Tibial artery (tissue), 4 donors: ENCODE measurements at regions of chr9 and their contacts with region 1.

Region 1: DNA sequence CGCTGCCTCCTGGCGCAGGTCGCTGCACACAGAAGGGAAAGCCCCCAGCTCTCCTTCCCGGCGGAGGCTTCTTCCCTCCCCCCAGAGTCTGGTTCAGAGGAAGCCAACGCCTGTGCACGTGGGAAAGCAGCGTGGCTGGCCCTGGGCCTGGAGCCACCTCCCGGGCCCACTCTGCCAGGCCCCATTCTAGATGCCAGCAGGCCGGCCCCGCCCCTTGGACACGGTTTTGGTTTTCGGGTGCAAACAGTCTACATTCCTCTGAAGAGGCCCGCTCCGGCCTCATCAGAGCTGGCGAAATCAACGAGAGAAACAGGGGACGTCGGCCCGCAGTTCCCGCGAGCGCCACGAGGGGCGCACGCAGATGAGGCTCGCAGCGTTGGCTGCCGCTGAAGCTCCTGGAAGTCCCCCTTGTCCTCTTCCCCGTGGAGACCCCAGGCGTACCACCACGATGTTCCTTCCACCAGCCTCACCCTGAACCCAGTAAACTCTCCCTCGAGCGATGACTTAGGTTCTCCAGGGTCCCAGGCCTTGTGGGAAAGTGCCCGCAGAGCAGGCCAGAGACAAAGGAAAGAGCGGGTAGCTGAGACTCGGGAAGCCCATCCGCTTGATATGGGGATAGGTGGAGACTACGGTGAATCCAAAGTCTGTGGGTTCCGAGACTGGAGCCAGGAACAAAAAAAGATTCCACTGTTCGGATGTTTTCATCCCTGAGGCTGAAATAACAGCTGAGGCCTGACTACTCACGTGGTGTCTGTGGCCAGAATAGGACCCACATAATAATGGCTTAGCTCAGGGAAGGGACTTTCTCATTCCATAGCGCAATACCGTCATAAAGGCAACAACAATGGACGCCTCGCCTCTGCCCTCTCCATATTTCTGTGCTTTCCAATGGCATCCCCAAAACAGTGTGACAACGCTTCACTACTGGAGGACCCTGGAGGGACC is 64.2 kb downstream of the KLF4 start:
- DNase-seq: peak; percentile 91 to 96
- H3K4me3 ChIP-seq: peak overlapping the region; percentile 29 to 49
- H3K27ac ChIP-seq: peak overlapping the region; percentile 61 to 63
- H3K4me1 ChIP-seq: peaks cover 0 to 14% (median 11%) of the 10 kb centered on the region in 4 donors
- H3K27me3 ChIP-seq: no peaks in the 10 kb centered on the region
- CTCF ChIP-seq: peak; percentile 86 to 96

Region 2: GRCh38 chr9:107080130-107080529 is 345.2 kb before region 1 on chr9:
- intact Hi-C with region 1: no loop called
- DNase-seq: no peak
- H3K4me3 ChIP-seq: no peak overlapping the region
- H3K27ac ChIP-seq: no peak overlapping the region
- H3K4me1 ChIP-seq: no peaks in the 10 kb centered on the region
- H3K27me3 ChIP-seq: no peaks in the 10 kb centered on the region
- CTCF ChIP-seq: no peak

Region 3: GRCh38 chr9:107465467-107466451 is 40.4 kb after region 1 on chr9:
- intact Hi-C with region 1: no loop called
- DNase-seq: peak; percentile 78 to 85
- H3K4me3 ChIP-seq: peak overlapping the region; percentile 47 to 61
- H3K27ac ChIP-seq: peak overlapping the region; percentile 9 to 13
- H3K4me1 ChIP-seq: peaks cover 0 to 14% (median 8%) of the 10 kb centered on the region in 4 donors
- H3K27me3 ChIP-seq: peaks cover 0 to 3% of the 10 kb centered on the region in 2 donors
- CTCF ChIP-seq: peak; percentile 85 to 94

Region 4: DNA sequence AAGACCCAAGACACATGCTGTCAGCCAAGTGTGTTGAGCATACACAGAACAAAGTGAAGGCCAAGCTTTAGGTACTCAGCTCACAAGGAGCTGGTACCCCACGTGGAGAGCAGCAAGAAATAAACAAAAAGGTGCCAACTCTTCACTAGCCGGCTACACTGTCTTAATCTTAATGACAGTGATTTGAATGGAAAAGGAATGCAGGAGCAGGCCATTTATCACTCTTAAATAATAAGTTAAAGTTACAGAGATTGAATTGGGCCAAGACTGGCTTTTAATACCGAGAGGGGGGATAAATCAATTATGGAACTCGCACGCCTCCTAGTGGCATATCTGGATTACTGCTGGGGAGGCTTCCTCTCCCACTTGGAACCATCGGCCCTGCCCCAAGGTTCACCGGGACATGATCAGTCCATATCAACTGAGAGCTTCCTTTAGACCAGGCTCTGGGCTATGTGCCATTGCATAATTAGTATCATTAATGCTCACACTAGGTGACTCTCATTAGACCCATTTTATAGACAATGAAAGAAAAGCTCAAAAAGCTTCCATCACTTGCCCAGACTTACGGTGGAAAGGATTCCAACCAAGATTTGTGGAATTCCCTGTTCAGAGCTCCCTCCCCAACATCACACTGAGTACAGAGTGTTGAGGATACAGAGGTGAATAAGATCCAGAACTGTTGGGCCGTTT is 1336.4 kb after region 1 on chr9:
- intact Hi-C with region 1: loop called (anchors 10 kb)
- DNase-seq: peak in 1 of 2 donors; percentile 64
- H3K4me3 ChIP-seq: no peak overlapping the region
- H3K27ac ChIP-seq: no peak overlapping the region
- H3K4me1 ChIP-seq: no peaks in the 10 kb centered on the region
- H3K27me3 ChIP-seq: no peaks in the 10 kb centered on the region
- CTCF ChIP-seq: peak; percentile 79 to 82